BJ (cell line): ENCODE measurements at regions of chr11 and their contacts with region 1.

Region 1: DNA sequence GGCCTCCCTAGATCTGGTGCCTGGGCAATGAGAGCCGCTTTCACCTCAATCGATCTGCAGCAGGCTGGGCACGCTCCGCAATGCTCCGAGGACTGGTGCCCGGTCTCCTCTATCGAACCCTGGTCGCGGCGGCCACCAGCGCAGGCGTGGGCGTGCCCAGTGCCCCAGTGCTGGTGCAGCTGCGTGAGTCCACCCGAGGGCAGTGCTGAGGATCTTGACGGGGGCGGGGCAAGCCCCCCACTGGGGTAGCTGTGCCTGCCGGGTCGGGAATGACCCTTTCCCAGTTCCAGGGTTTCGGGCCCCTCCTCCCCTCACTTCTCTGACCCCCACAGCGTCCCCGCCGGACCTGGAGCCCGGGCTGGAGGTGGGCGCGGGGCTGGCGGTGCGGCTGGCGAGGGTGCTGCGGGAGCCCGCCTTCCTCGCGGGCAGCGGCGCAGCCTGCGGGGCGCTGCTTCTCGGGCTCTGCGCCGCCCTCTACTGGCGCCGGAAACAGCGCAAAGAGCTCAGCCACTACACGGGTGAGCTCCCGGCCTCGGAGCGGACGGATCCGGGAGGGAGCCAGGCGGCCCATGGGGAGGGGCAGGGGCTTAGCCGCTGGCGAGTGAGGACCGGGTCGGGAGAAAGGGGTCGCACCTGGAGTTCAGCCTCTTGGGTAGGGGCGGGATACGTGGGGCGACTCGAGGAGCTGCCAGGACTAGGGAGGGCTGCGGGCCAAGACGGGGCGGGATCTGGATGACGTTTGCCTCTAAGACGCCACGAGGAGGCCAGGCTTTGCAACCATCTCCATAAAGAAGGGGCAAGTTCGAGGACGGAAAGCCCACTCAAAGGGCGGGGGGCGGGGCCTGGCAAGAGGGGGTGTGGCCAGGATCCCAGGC is 10.9 kb downstream of the ROBO3 start:
- DNase-seq: peak; percentile 58
- H3K4me3 ChIP-seq: peak overlapping the region; percentile 68
- H3K27me3 ChIP-seq: peaks cover 10% of the 10 kb centered on the region
- CTCF ChIP-seq: peak; percentile 74

Region 2: GRCh38 chr11:124831897-124832296 is 44.3 kb before region 1 on chr11:
- CTCF ChIA-PET with region 1: no interaction called
- POLR2A ChIA-PET with region 1: no interaction called
- DNase-seq: no peak
- H3K4me3 ChIP-seq: no peak overlapping the region
- H3K27me3 ChIP-seq: peaks cover 3% of the 10 kb centered on the region
- CTCF ChIP-seq: no peak

Region 3: DNA sequence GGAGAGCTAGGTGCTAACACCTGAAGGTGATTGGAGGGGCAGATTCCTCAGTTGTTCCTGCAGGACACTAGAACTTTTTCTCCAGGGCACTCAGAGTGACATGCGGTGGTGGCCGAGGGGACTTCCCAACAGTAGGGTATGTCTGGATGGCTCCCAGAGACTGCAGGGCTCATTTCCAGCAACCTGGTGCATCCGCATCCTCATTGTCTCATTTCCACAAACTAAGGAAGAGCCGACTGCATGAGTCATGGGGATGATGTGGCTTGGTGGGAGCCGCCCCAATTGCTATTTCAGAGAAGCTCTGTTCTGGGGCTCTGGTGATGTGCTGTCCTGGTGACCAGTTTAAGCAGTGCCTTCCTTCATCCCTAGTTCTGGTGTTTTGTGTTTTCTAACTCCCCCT is 24.3 kb after region 1 on chr11:
- CTCF ChIA-PET with region 1: interaction called, 13 read pairs
- POLR2A ChIA-PET with region 1: interaction called, 3 read pairs
- DNase-seq: peak; percentile 73
- H3K4me3 ChIP-seq: no peak overlapping the region
- H3K27me3 ChIP-seq: no peaks in the 10 kb centered on the region
- CTCF ChIP-seq: no peak

Region 4: GRCh38 chr11:124953753-124954589 is 77.8 kb after region 1 on chr11 and contains the start of gene CCDC15:
- CTCF ChIA-PET with region 1: interaction called, 16 read pairs
- POLR2A ChIA-PET with region 1: no interaction called
- DNase-seq: peak; percentile 88
- H3K4me3 ChIP-seq: peak within 1 kb of the TSS; percentile 63
- H3K27me3 ChIP-seq: no peaks in the 10 kb centered on the region
- CTCF ChIP-seq: no peak
- polyA plus RNA-seq, gene CCDC15: 0.66 and 1.3 TPM in 2 replicates

Region 5: GRCh38 chr11:125091247-125091876 is 215.2 kb after region 1 on chr11:
- CTCF ChIA-PET with region 1: no interaction called
- POLR2A ChIA-PET with region 1: no interaction called
- DNase-seq: no peak
- H3K4me3 ChIP-seq: no peak overlapping the region
- H3K27me3 ChIP-seq: no peaks in the 10 kb centered on the region
- CTCF ChIP-seq: peak; percentile 62